CD4-positive, alpha-beta T cell (primary cell): ENCODE measurements at regions of chr15 and their contacts with region 1.

Region 1: DNA sequence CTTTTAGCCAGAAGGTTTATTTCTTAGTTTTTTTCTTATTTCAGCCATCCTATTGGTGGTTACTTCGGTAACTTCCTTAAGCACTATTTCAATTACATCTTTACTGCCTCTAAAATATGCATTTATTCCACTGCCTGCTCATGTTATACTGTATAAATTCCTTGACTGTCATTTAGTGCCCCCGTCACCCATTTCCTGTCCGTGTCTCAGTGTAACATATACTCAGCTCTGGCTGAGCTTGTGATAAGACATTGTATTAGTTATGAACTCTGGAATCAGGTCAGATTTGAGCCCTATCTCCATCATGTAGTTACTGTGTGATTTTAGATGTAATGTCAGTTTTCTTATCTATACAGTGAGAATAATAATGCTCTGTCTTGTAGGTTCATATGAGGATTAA is 24.2 kb downstream of the PIAS1 start:
- DNase-seq: no peak
- ATAC-seq: no peak
- H3K4me3 ChIP-seq: no peak overlapping the region
- H3K4me3 Mint-ChIP-seq: peak overlapping the region; percentile 0
- H3K27ac ChIP-seq: no peak overlapping the region
- H3K27ac Mint-ChIP-seq: peak overlapping the region; percentile 4
- H3K4me1 ChIP-seq: peaks cover 15% of the 10 kb centered on the region
- H3K4me1 Mint-ChIP-seq: peaks cover 91% of the 10 kb centered on the region
- H3K27me3 ChIP-seq: no peaks in the 10 kb centered on the region
- H3K27me3 Mint-ChIP-seq: no peaks in the 10 kb centered on the region
- CTCF ChIP-seq: no peak

Region 2: DNA sequence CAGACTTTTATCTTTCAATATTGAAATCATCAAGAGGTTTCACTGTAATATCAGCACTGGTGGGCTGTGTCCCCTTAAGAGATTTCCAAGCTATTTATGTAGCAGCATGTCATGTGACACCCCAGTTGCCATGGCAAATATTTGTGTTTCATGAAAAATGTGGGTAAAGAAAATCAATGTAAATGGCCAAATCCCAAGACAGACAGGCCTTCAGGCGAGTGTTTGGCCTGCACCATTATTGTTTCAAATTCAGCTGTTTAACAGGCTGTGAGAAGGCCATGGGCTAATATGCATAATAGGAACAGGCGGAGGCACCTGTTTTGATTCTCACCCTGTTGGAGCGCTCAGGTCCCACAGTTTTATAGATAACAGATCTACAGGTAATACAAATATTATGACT is 719.6 kb before region 1 on chr15:
- CTCF ChIA-PET with region 1: no interaction called
- POLR2A ChIA-PET with region 1: no interaction called
- intact Hi-C with region 1: no loop called
- DNase-seq: no peak
- ATAC-seq: no peak
- H3K4me3 ChIP-seq: no peak overlapping the region
- H3K4me3 Mint-ChIP-seq: no peak overlapping the region
- H3K27ac ChIP-seq: no peak overlapping the region
- H3K27ac Mint-ChIP-seq: no peak overlapping the region
- H3K4me1 ChIP-seq: no peaks in the 10 kb centered on the region
- H3K4me1 Mint-ChIP-seq: no peaks in the 10 kb centered on the region
- H3K27me3 ChIP-seq: no peaks in the 10 kb centered on the region
- H3K27me3 Mint-ChIP-seq: no peaks in the 10 kb centered on the region
- CTCF ChIP-seq: no peak

Region 3: GRCh38 chr15:68042156-68042854 is 36.1 kb before region 1 on chr15:
- CTCF ChIA-PET with region 1: no interaction called
- POLR2A ChIA-PET with region 1: no interaction called
- intact Hi-C with region 1: no loop called
- DNase-seq: no peak
- ATAC-seq: no peak
- H3K4me3 ChIP-seq: no peak overlapping the region
- H3K4me3 Mint-ChIP-seq: no peak overlapping the region
- H3K27ac ChIP-seq: no peak overlapping the region
- H3K27ac Mint-ChIP-seq: no peak overlapping the region
- H3K4me1 ChIP-seq: no peaks in the 10 kb centered on the region
- H3K4me1 Mint-ChIP-seq: no peaks in the 10 kb centered on the region
- H3K27me3 ChIP-seq: peaks cover 3 to 5% of the 10 kb centered on the region in 2 experiments
- H3K27me3 Mint-ChIP-seq: peaks cover 18% of the 10 kb centered on the region
- CTCF ChIP-seq: no peak

Region 4: GRCh38 chr15:68114356-68114755 is 36.0 kb after region 1 on chr15:
- CTCF ChIA-PET with region 1: no interaction called
- POLR2A ChIA-PET with region 1: interaction called, 5 read pairs
- intact Hi-C with region 1: loop called in 1 of 2 experiments (anchors 5 kb)
- DNase-seq: peak in 3 of 14 experiments; percentile 13 to 41 (median 18)
- ATAC-seq: peak; percentile 49
- H3K4me3 ChIP-seq: peak overlapping the region; percentile 18
- H3K4me3 Mint-ChIP-seq: peak overlapping the region; percentile 71
- H3K27ac ChIP-seq: no peak overlapping the region
- H3K27ac Mint-ChIP-seq: peak overlapping the region; percentile 3
- H3K4me1 ChIP-seq: peaks cover 3% of the 10 kb centered on the region
- H3K4me1 Mint-ChIP-seq: peaks cover 80% of the 10 kb centered on the region
- H3K27me3 ChIP-seq: no peaks in the 10 kb centered on the region
- H3K27me3 Mint-ChIP-seq: no peaks in the 10 kb centered on the region
- CTCF ChIP-seq: no peak